Activated naive CD4-positive, alpha-beta T cell treated with anti-CD3 and anti-CD28 coated beads for 36 hours (primary cell): ENCODE measurements at regions of chr19 and their contacts with region 1.

Region 1: GRCh38 chr19:58499021-58499927 is 12.5 kb downstream of the SLC27A5 start:
- DNase-seq: peak; percentile 100
- H3K4me3 Mint-ChIP-seq: peak overlapping the region; percentile 92
- H3K27ac Mint-ChIP-seq: peak overlapping the region; percentile 81
- H3K4me1 Mint-ChIP-seq: peaks cover 23% of the 10 kb centered on the region
- H3K27me3 Mint-ChIP-seq: no peaks in the 10 kb centered on the region

Region 2: DNA sequence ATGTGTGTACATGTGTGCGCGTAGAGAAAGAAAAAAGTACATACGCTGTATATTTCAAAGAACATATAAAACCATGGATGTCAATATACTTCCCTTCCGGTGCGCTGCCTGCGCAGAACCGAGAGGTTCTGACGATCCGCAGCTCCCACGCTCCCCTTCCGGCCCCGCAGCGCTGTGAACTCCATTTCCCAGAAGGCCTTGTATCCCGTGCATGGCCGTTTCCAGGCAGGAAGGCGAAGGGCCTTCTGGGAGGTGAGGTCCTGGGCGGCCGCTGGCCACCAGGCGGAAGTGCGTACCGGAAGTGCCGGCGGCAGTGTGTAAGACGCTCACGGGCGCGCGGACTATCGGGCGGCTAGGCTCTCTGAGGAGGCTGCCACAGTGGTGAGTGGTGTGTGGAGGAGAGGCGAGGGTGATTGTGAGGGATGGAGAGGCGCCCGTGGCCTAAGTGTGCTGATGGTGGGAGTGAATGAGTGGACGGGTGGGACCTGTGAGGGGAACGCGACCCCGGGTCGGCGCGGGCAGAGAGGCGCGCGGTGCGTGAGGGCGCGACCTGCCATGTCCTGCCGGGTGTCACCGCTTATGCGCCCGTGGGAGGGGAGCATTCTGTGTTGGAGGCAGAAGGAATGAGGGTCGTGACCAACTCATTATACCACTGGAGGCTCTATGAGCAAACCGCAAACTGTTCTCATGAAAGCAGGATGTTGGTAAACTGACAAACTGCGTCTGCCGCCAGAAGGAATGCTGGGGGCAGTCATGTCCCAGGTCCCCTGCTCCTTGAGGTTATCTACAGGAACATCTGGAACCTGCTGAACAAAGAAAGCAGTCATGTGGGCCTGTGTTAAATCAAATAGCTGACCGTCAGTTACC is 194.0 kb before region 1 on chr19 and contains the start of gene ERVK3-1:
- CTCF ChIA-PET with region 1: no interaction called
- intact Hi-C with region 1: loop called (anchors 1 kb)
- DNase-seq: peak; percentile 95
- H3K4me3 Mint-ChIP-seq: peak within 1 kb of the TSS; percentile 100
- H3K27ac Mint-ChIP-seq: peak within 1 kb of the TSS; percentile 99
- H3K4me1 Mint-ChIP-seq: peaks cover 46% of the 10 kb centered on the region
- H3K27me3 Mint-ChIP-seq: no peaks in the 10 kb centered on the region
- total RNA-seq, gene ERVK3-1: 24.5 to 27.7 TPM

Region 3: GRCh38 chr19:58408152-58409009 is 90.9 kb before region 1 on chr19 and contains the start of gene ZNF584:
- CTCF ChIA-PET with region 1: no interaction called
- intact Hi-C with region 1: loop called (anchors 5 kb)
- DNase-seq: peak; percentile 97
- H3K4me3 Mint-ChIP-seq: peak within 1 kb of the TSS; percentile 89
- H3K27ac Mint-ChIP-seq: peak within 1 kb of the TSS; percentile 93
- H3K4me1 Mint-ChIP-seq: peaks cover 30% of the 10 kb centered on the region
- H3K27me3 Mint-ChIP-seq: no peaks in the 10 kb centered on the region
- total RNA-seq, gene ZNF584: 3.4 to 4.8 TPM

Region 4: GRCh38 chr19:58466760-58467589 is 32.3 kb before region 1 on chr19 and contains the start of gene ZNF324:
- CTCF ChIA-PET with region 1: no interaction called
- intact Hi-C with region 1: loop called (anchors 1 kb)
- DNase-seq: peak; percentile 99
- H3K4me3 Mint-ChIP-seq: peak within 1 kb of the TSS; percentile 83
- H3K27ac Mint-ChIP-seq: no peak within 1 kb of the TSS
- H3K4me1 Mint-ChIP-seq: peaks cover 20% of the 10 kb centered on the region
- H3K27me3 Mint-ChIP-seq: peaks cover 2% of the 10 kb centered on the region
- total RNA-seq, gene ZNF324: 2.4 to 3.0 TPM

Region 5: GRCh38 chr19:58513694-58514563 is 14.7 kb after region 1 on chr19:
- CTCF ChIA-PET with region 1: interaction called, 5 read pairs
- intact Hi-C with region 1: loop called (anchors 1 kb)
- DNase-seq: peak; percentile 96
- H3K4me3 Mint-ChIP-seq: peak overlapping the region; percentile 88
- H3K27ac Mint-ChIP-seq: peak overlapping the region; percentile 83
- H3K4me1 Mint-ChIP-seq: peaks cover 36% of the 10 kb centered on the region
- H3K27me3 Mint-ChIP-seq: no peaks in the 10 kb centered on the region

Region 6: DNA sequence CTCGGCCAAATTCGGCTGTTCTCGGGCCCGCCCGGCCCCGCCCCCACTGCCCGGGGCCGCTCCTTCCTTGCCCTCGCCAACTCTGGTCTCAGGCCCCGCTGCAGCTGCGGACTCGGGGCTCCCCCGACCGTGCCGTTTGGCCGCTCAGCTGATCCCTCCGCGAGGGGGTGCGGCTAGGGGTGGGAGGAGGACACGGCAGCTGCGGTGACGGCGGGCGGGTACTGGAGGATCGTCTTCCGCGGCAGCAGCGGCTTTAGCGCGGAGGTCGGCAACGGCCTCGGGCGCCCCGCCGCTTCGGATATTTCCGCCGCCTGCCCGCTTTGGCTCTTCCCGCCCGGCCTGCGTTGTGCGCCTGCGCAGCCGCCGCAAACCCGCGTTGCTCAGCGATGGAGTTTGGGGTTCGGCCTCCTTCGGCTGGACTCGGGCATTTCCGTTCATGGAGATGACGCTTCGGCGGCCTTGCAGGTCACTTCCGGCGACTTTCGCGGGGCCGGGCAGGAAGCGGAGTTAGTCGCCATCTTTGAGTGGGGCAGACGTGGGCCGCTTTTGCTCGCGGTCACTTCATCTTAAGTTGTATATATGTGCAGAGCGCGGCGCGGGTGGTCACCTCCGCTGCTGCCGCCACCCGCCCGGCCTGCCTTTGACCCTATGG is 59.5 kb after region 1 on chr19:
- CTCF ChIA-PET with region 1: no interaction called
- intact Hi-C with region 1: loop called (anchors 1 kb)
- DNase-seq: peak; percentile 100
- H3K4me3 Mint-ChIP-seq: peak overlapping the region; percentile 90
- H3K27ac Mint-ChIP-seq: peak overlapping the region; percentile 100
- H3K4me1 Mint-ChIP-seq: peaks cover 66% of the 10 kb centered on the region
- H3K27me3 Mint-ChIP-seq: no peaks in the 10 kb centered on the region